ENCODE measurements at regions of chr17 and their contacts with region 1.

Region 1: DNA sequence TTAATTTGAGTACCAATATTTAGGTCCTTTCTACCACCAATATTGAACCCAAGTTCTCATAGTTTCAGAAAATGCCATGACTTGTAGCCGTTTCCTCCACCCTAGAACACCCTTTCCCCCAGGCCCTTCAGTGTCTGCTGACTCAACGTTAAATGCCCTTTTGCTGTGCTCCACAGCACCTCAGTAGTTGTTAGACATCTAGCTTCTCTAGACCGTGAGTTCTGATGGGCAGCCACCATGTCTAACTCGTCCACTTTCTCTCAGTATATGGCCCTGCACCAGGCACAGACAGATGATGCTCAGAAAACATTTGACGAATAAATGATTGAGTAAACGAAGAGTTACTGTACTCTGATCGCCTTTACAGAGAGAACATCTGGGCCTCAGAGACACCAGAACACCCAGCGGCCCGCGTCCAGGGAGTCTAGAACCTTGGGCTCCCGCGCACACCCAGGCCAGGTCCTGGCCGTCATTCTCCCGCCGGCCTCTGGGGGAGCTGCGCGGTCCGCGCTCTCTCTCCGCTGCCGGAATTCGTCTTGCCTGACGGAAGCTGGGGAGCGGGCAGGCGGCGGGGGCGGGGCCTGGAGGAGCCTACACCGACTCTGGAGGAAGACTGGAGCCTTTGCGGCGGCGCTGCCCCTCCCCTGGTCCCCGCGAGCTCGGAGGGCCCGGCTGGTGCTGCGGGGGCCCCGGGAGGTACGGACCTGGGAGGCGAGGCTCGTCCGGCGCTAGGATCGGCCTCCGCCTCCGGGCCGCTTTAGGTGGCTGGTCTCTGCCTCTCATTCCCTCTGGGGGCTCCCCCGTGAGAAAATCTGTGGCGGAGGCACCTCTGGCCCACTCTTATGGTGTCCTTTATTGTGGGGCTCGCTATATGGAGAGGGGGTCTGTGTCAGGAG is at the start of gene NKIRAS2:
- DNase-seq: peak; percentile 97
- ATAC-seq: peak; percentile 83
- total RNA-seq, gene NKIRAS2: 43.8 TPM

Region 2: DNA sequence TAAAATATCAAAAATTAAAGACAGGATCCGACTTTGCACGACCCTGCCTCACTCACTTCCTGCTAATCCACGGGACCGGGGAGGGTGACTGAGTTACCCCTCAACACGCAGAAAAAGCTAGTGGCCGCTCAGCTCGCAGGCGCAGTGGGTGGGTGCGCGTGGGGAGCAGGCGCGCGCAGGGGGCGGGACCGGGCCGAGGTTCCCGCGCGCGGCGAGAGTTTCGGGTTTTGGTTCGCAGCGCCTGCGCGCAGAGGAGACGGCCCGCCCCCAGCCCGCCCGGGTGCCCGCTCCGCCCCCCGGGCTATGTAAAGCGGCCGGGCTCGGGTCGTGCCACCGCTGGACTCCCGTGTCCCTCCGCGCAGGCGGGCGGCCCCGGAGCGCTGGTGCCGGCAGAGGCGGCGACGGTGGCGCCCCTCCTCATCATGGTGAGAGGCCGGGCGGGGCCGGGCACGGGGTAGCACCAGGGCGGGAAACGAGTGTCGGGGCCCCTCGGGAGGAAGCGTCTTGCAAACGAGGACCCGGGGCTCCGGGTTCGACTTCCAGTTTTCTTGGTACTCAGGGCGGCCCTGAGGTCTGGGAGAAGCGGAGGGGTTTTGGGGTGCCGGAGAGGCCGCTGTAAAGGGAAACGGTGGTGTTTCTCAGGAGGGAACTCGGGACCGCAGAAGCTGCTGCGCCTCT is 53.2 kb before region 1 on chr17 and contains the start of gene CNP:
- intact Hi-C with region 1: loop called (anchors 5 kb)
- DNase-seq: peak; percentile 96
- ATAC-seq: peak; percentile 95
- total RNA-seq, gene CNP: 23.0 TPM